ENCODE measurements at regions of chr3 and their contacts with region 1.

Region 1: DNA sequence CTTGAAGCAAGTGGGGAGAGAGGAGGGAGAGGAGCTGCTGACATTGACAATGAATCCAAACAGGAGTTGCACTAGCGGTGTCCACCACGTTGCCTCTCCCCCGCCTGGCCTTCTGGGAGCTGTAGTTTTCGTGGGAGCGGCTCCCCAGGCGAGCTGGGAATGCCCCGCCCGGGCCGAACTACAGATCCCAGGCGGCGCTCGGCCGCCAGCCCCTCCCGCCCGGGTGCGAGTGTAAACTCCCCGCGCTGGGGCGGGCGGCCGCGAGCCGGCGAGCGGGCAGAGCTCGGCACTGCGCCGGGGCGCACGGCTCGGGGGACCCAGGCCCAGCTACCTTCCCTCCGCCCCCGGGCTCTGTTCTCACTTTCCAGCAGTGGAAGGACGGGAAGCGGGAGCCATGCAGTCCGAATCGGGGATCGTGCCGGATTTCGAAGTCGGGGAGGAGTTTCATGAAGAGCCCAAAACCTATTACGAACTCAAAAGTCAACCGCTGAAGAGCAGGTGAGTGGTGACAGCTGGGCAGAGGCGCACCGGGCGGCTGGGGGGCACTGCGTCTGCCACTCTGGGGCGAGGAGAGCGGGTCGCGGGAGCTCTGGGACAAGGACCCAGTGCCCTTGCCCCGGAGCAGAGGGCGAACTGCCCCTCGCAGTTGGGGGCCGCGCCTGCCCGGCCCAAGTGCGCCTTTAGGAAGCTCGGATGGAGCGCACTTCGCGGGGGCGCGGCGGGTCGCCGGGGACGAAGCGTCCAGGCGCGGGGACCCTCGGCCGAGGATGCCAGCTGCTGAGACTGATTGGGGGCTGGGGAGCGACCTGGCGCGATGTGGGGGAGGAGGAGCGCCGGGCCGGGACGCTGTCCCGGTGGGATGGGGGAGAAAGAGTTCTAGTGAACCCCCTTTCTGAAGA is at the start of gene MITF:
- DNase-seq: peak; percentile 96
- ATAC-seq: peak; percentile 97
- total RNA-seq, gene MITF: 65.5 TPM

Region 2: GRCh38 chr3:69784954-69785514 is 45.6 kb after region 1 on chr3:
- intact Hi-C with region 1: loop called (anchors 10 kb)
- DNase-seq: peak; percentile 79
- ATAC-seq: peak; percentile 82